Vagina (tissue), 2 donors: ENCODE measurements at regions of chr15 and their contacts with region 1.

Region 1: GRCh38 chr15:83207622-83208411 is at the start of gene HDGFL3:
- DNase-seq: no peak
- H3K4me3 ChIP-seq: peak within 1 kb of the TSS; percentile 85 to 88
- H3K27ac ChIP-seq: peak within 1 kb of the TSS; percentile 91
- H3K4me1 ChIP-seq: peaks cover 14% of the 10 kb centered on the region
- H3K27me3 ChIP-seq: no peaks in the 10 kb centered on the region
- CTCF ChIP-seq: no peak
- POLR2A ChIP-seq: no peak
- total RNA-seq, gene HDGFL3: 27.7 TPM

Region 2: GRCh38 chr15:83066734-83067637 is 140.8 kb before region 1 on chr15 and contains the start of gene BTBD1:
- intact Hi-C with region 1: loop called (anchors 2 kb)
- DNase-seq: peak in 1 of 2 donors; percentile 93
- H3K4me3 ChIP-seq: peak within 1 kb of the TSS; percentile 55 to 86
- H3K27ac ChIP-seq: peak within 1 kb of the TSS; percentile 94
- H3K4me1 ChIP-seq: peaks cover 47% of the 10 kb centered on the region
- H3K27me3 ChIP-seq: no peaks in the 10 kb centered on the region
- CTCF ChIP-seq: no peak
- POLR2A ChIP-seq: peak in 1 of 2 donors; percentile 88
- total RNA-seq, gene BTBD1: 51.3 TPM